Sigmoid colon (tissue), 7 donors: ENCODE measurements at regions of chr3 and their contacts with region 1.

Region 1: GRCh38 chr3:48465531-48466378 is 19.2 kb downstream of the ATRIP start:
- DNase-seq: peak; percentile 100
- H3K4me3 ChIP-seq: peak overlapping the region; percentile 40 to 55 (median 50)
- H3K27ac ChIP-seq: peak overlapping the region; percentile 99 to 100 (median 99)
- H3K4me1 ChIP-seq: peaks cover 0 to 58% (median 54%) of the 10 kb centered on the region in 4 donors
- H3K27me3 ChIP-seq: no peaks in the 10 kb centered on the region
- CTCF ChIP-seq: peak in 2 of 4 experiments; percentile 63 to 66
- EP300 ChIP-seq: peak in 1 of 4 donors; percentile 61
- POLR2A ChIP-seq: peak; percentile 76 to 78

Region 2: DNA sequence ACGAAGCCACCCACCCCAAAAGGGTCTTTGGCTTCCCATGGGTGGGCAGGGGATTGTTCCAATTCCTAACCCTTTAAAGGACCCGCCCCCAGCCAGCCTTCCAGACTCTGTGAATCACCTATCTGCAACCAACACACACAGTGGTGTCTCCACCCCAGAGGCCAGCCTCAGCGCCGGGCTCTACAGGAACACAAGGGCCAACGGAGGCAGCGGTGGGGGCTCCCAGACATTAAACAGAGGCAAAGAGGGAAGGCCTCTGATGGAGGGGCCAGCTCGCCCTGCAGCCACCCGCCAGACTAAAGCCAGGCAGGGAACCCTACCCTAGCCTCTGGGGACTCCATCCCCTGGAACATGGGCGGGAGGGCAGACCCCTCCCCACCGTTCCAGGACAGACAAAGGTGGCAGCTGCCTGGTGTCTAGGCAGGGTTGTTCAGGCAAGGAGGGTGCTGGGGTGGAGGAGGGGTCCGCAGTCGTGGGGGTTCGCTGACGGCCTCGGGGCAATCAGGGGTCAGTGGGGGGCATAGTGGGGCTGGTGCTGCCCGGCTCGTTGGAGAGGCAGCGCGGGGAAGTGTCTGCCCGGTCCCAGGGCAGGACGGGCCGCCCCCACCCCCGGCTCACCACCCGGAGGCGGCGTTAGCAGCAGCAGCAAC is 37.8 kb after region 1 on chr3:
- intact Hi-C with region 1: loop called (anchors 2 kb)
- DNase-seq: peak; percentile 88
- H3K4me3 ChIP-seq: peak overlapping the region; percentile 63 to 78 (median 73)
- H3K27ac ChIP-seq: peak overlapping the region; percentile 83 to 95 (median 91)
- H3K4me1 ChIP-seq: peaks cover 0 to 26% (median 24%) of the 10 kb centered on the region in 4 donors
- H3K27me3 ChIP-seq: no peaks in the 10 kb centered on the region
- CTCF ChIP-seq: no peak
- EP300 ChIP-seq: no peak
- POLR2A ChIP-seq: no peak

Region 3: GRCh38 chr3:48548729-48549705 is 83.3 kb after region 1 on chr3:
- intact Hi-C with region 1: loop called (anchors 1 kb)
- DNase-seq: peak; percentile 91
- H3K4me3 ChIP-seq: no peak overlapping the region
- H3K27ac ChIP-seq: no peak overlapping the region
- H3K4me1 ChIP-seq: peaks cover 0 to 5% (median 0%) of the 10 kb centered on the region in 4 donors
- H3K27me3 ChIP-seq: no peaks in the 10 kb centered on the region
- CTCF ChIP-seq: peak; percentile 88 to 96 (median 94)
- EP300 ChIP-seq: no peak
- POLR2A ChIP-seq: no peak